Activated CD4-positive, alpha-beta memory T cell treated with anti-CD3 and anti-CD28 coated beads, Interleukin-2, amount 10 ng/mL, durations not matched to agents 7 days and 5 days (primary cell): ENCODE measurements at regions of chr15 and their contacts with region 1.

Region 1: DNA sequence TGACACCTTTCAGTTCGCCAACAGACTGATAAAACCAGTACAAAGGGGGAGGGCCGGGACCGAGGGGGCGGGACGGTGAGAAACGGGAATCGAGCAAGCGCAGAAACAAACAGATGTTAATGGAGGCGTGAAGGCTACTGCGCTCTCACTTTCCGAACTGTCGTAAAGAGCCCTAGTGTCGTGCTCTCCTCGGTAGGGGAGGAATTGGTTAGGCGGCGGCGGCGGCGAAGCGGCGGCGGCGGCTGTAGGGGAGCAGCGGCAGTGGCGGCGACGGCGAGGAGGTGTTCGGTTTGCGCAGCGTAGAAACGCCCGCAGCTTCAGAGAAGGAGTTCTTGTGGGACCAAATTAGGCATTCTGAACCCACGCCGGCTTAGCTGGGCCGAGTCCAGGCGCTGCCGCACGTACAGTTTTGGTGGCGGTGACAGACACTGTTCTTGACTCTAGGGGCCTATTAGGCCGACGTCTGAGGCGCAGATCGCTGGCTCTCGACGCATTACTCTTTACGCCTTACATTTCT is at the start of gene RNF111:
- DNase-seq: peak; percentile 92
- H3K4me3 Mint-ChIP-seq: peak within 1 kb of the TSS; percentile 96
- H3K27ac Mint-ChIP-seq: peak within 1 kb of the TSS; percentile 80
- H3K4me1 Mint-ChIP-seq: peaks cover 47% of the 10 kb centered on the region
- H3K27me3 Mint-ChIP-seq: peaks cover 9% of the 10 kb centered on the region
- total RNA-seq, gene RNF111: 32.3 to 37.2 TPM

Region 2: DNA sequence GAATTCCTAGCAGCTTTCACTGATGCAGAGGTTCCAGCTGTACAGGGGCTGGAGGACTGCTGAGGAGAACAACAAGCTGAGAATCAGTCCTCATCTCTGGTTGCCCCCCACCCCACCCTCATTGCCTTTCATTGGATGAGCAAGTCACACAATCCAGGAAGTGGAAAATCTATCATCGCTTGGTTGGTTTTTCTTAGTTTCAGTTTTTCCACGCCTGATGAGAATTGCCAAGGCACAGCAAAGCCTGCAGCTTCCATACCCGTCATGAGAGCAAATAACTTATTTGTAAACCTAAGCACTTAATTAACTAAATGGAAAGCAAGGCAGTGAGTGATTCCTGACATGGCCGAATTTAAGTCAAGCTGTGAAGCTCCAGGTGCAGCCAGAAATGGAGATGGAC is 577.2 kb before region 1 on chr15:
- CTCF ChIA-PET with region 1: no interaction called
- POLR2A ChIA-PET with region 1: no interaction called
- DNase-seq: peak; percentile 35
- H3K4me3 Mint-ChIP-seq: peak overlapping the region; percentile 72
- H3K27ac Mint-ChIP-seq: peak overlapping the region; percentile 67
- H3K4me1 Mint-ChIP-seq: peaks cover 9% of the 10 kb centered on the region
- H3K27me3 Mint-ChIP-seq: peaks cover 1% of the 10 kb centered on the region

Region 3: GRCh38 chr15:59051873-59052861 is 64.6 kb after region 1 on chr15:
- CTCF ChIA-PET with region 1: no interaction called
- POLR2A ChIA-PET with region 1: interaction called, 11 read pairs
- DNase-seq: no peak
- H3K4me3 Mint-ChIP-seq: peak overlapping the region; percentile 52
- H3K27ac Mint-ChIP-seq: peak overlapping the region; percentile 89
- H3K4me1 Mint-ChIP-seq: peaks cover 32% of the 10 kb centered on the region
- H3K27me3 Mint-ChIP-seq: no peaks in the 10 kb centered on the region